ENCODE measurements at regions of chr6 and their contacts with region 1.

Region 1: DNA sequence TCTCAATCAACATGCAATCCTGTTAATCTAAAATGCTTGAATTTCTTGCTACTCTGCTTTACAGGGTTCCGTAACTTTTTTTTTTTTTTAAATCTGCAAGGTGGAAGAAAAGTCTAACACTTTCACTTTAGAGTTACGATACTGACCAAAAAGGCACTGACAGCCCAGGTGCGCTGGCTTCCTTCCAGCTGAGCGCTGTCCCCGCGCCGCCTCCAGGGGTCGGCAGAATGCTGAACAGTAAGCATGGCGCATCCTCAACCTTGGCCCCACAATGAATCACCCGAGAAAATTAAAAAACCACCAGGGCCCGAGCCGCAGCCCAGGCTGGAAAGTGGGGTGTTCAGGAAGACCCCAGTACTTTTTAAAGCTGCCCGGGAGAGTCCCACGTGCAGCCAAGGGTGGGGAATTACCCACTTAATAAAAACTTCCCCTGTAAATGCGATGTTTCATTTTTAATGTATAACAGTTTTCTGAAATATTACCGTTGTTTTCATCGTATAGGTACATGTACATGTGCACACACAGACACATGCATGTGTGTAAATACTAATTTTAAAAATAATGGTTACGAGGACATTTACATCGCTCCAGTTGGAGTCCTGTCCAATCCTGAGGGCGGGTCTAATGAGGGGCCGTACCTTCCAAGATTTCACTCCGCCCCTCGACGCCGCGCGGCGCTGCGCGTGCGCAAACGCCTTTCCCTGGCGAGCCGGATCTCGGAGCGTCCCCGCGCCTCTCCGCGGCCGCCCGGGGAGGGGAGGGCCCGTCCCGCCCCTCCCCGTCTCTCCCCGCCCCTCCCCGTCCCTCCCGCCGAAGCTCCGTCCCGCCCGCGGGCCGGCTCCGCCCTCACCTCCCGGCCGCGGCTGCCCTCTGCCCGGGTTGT is at the start of gene GINM1:
- DNase-seq: peak; percentile 95 to 98
- ATAC-seq: peak; percentile 87 to 95 (median 89)
- H3K4me3 ChIP-seq: peak within 1 kb of the TSS; percentile 98
- H3K4me3 Mint-ChIP-seq: peak within 1 kb of the TSS; percentile 95
- H3K27ac ChIP-seq: peak within 1 kb of the TSS; percentile 88
- H3K27ac Mint-ChIP-seq: peak within 1 kb of the TSS; percentile 86 to 88
- H3K4me1 ChIP-seq: peaks cover 9% of the 10 kb centered on the region
- H3K4me1 Mint-ChIP-seq: peaks cover 8 to 9% of the 10 kb centered on the region in 2 donors
- H3K27me3 ChIP-seq: no peaks in the 10 kb centered on the region
- H3K27me3 Mint-ChIP-seq: peaks cover under 1 to 1% of the 10 kb centered on the region in 2 donors
- CTCF ChIP-seq: peak; percentile 62
- total RNA-seq, gene GINM1: 19.0 to 25.9 (median 21.6) TPM

Region 2: GRCh38 chr6:149545754-149546528 is 19.8 kb before region 1 on chr6 and contains the start of gene PPIL4:
- intact Hi-C with region 1: loop called (anchors 2 kb)
- DNase-seq: peak; percentile 98 to 99
- ATAC-seq: peak; percentile 89 to 97 (median 91)
- H3K4me3 ChIP-seq: peak within 1 kb of the TSS; percentile 99
- H3K4me3 Mint-ChIP-seq: peak within 1 kb of the TSS; percentile 97
- H3K27ac ChIP-seq: peak within 1 kb of the TSS; percentile 99
- H3K27ac Mint-ChIP-seq: peak within 1 kb of the TSS; percentile 91 to 96
- H3K4me1 ChIP-seq: peaks cover 15% of the 10 kb centered on the region
- H3K4me1 Mint-ChIP-seq: peaks cover 41 to 42% of the 10 kb centered on the region in 2 donors
- H3K27me3 ChIP-seq: no peaks in the 10 kb centered on the region
- H3K27me3 Mint-ChIP-seq: no peaks in the 10 kb centered on the region
- CTCF ChIP-seq: peak; percentile 95
- total RNA-seq, gene PPIL4: 24.4 to 32.8 (median 25.0) TPM

Region 3: GRCh38 chr6:149580880-149581279 is 15.1 kb after region 1 on chr6:
- intact Hi-C with region 1: no loop called
- DNase-seq: no peak
- ATAC-seq: no peak
- H3K4me3 ChIP-seq: no peak overlapping the region
- H3K4me3 Mint-ChIP-seq: no peak overlapping the region
- H3K27ac ChIP-seq: no peak overlapping the region
- H3K27ac Mint-ChIP-seq: no peak overlapping the region
- H3K4me1 ChIP-seq: no peaks in the 10 kb centered on the region
- H3K4me1 Mint-ChIP-seq: peaks cover 5 to 14% of the 10 kb centered on the region in 2 donors
- H3K27me3 ChIP-seq: no peaks in the 10 kb centered on the region
- H3K27me3 Mint-ChIP-seq: no peaks in the 10 kb centered on the region
- CTCF ChIP-seq: no peak

Region 4: GRCh38 chr6:149648148-149649145 is 82.7 kb after region 1 on chr6 and contains the start of gene KATNA1:
- intact Hi-C with region 1: loop called (anchors 1 kb)
- DNase-seq: peak; percentile 64 to 92
- ATAC-seq: peak; percentile 87 to 90 (median 87)
- H3K4me3 ChIP-seq: peak within 1 kb of the TSS; percentile 83
- H3K4me3 Mint-ChIP-seq: peak within 1 kb of the TSS; percentile 92
- H3K27ac ChIP-seq: peak within 1 kb of the TSS; percentile 69
- H3K27ac Mint-ChIP-seq: peak within 1 kb of the TSS; percentile 82 to 88
- H3K4me1 ChIP-seq: peaks cover 13% of the 10 kb centered on the region
- H3K4me1 Mint-ChIP-seq: peaks cover 26 to 29% of the 10 kb centered on the region in 2 donors
- H3K27me3 ChIP-seq: no peaks in the 10 kb centered on the region
- H3K27me3 Mint-ChIP-seq: no peaks in the 10 kb centered on the region
- CTCF ChIP-seq: no peak
- total RNA-seq, gene KATNA1: 16.4 to 22.7 (median 21.0) TPM

Region 5: DNA sequence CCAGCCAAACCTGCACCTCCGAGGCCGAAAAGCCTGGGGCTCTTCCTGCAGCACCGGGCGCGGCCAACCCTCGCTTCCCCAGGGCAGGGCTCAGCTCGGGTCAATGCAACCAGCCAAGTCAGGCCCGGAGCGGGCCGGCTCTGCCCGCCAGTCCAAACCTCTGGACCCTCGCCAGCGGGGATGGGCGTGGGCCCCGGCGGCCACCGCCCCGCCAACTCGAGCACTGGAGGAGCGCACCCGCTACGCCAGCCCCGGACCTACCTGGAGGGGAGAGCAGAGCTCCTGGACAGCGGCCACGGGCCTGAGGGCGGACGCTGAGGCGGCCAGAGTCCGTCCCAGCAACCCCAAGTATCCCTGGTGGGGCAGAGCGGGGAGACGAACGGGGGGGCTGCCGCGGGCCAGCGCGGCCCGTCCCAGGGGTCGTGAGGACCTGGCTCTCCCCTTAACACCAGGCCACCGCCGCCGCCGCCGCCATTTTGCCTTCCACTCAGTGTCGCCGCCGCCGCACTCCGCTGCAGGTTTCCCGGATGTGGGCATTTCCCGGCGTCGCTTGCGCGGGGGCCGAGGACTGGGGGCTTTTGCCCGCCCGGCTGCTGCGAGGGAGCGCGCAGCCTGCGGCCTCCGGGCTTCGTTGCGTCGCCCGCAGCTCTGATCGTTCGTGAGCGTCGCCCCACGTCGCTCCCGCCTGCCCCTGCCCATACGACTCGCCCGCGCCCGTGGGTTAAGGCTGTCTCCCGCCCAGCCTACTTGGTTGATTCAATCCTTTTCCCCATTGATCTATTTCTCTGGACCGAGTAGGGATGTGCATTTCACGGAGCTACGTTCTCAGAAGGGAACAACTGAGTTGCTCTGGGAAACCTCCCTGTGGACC is 152.1 kb after region 1 on chr6 and contains the start of gene LATS1:
- intact Hi-C with region 1: loop called (anchors 5 kb)
- DNase-seq: peak; percentile 92 to 94
- ATAC-seq: peak; percentile 90 to 97 (median 95)
- H3K4me3 ChIP-seq: peak within 1 kb of the TSS; percentile 81
- H3K4me3 Mint-ChIP-seq: peak within 1 kb of the TSS; percentile 96
- H3K27ac ChIP-seq: peak within 1 kb of the TSS; percentile 92
- H3K27ac Mint-ChIP-seq: peak within 1 kb of the TSS; percentile 94 to 97
- H3K4me1 ChIP-seq: peaks cover 11% of the 10 kb centered on the region
- H3K4me1 Mint-ChIP-seq: peaks cover 25 to 29% of the 10 kb centered on the region in 2 donors
- H3K27me3 ChIP-seq: no peaks in the 10 kb centered on the region
- H3K27me3 Mint-ChIP-seq: no peaks in the 10 kb centered on the region
- CTCF ChIP-seq: no peak
- total RNA-seq, gene LATS1: 37.9 to 52.5 (median 49.4) TPM

Region 6: DNA sequence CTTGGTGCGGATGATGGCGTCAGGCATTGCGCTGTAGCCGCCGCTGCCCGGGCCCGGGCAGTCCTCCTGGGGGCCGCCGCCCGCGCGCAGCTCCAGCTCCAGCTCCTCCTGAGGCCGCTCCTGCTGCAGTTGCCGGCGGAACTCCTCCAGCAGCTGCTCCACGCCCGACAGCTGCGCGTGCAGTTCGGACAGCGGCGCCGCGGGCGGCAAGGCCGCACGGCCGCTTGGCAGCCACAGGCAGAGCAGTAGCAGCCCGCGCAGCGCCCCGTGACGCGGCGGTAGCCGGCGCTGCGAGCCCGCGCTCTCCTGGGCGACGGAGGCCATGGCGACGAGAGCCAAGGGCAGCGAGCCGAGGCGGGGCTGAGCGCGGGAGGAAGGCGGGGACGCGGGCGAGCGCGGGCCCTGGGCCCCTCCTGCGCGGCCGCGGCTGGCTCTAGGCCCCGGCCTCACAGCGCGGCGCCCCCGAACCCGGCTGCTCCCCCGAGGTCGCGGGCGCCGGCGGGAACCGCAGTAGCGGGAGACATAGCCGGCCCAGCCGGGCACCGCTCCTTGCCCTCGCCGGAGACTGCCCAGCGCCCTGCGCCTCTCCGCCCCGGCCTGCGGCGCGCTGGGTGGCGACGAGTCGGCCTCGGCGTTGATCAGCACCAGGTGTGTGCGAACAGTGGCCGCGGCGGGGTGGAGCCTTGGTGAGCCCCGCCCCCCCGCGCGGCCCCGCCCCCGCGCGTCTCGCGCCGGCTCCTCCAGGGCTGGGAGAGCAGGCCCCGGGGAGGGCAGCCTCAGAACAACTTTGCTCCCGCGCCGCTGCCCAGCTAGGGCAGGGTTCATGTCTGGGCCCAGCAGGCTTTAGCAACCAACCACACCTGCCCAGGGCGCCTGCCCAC is 298.2 kb after region 1 on chr6 and contains the start of gene LRP11:
- intact Hi-C with region 1: loop called (anchors 10 kb)
- DNase-seq: peak; percentile 65 to 88
- ATAC-seq: peak; percentile 88 to 94 (median 92)
- H3K4me3 ChIP-seq: peak within 1 kb of the TSS; percentile 19
- H3K4me3 Mint-ChIP-seq: peak within 1 kb of the TSS; percentile 78
- H3K27ac ChIP-seq: no peak within 1 kb of the TSS
- H3K27ac Mint-ChIP-seq: no peak within 1 kb of the TSS
- H3K4me1 ChIP-seq: peaks cover 13% of the 10 kb centered on the region
- H3K4me1 Mint-ChIP-seq: peaks cover 0 to 5% of the 10 kb centered on the region in 2 donors
- H3K27me3 ChIP-seq: peaks cover 2% of the 10 kb centered on the region
- H3K27me3 Mint-ChIP-seq: peaks cover 23 to 28% of the 10 kb centered on the region in 2 donors
- CTCF ChIP-seq: no peak
- total RNA-seq, gene LRP11: 0.16 to 0.43 (median 0.26) TPM

Measured in natural killer cell (primary cell).